ENCODE measurements at regions of chr19 and their contacts with region 1.

Region 1: DNA sequence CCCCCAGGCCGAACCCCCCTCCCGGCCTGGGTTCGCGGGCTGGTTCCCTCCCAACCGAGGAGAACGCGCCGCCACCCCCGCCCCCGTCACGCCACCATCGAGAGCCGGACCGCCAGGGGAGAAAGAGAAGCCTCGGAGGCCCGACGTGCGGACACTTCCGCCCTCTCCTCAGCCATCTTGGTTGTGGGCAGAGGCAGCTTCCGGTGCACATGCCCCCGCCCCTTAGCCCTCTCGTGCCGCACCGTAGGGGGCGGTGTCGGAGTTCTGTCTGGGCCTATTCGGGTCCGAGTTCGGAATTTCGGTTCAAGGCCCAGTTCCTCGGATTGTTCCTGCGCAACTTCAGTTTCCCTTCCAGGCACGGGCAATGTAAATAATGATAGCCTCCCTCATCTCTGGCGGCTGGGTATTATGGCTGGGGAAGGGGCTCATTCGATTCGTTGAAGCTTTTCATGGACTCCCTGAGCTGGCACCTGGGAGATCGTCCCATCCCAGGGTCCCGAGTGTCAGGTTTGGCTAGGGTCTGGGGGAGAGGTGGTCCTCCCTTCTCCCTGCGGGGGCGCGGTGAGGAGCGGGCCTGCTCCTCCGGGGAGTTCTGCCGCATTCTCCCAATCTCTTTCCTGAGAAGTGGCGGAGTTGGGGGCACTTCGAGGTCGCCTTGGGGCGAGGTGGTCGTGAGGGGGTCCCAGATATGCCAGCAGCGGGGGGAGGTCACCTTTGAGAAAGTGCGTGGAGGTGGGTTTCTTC is at the starts of genes IER2 and STX10:
- DNase-seq: peak; percentile 90 to 96 (median 91)
- H3K4me3 ChIP-seq: peak within 1 kb of the TSS; percentile 81 to 98
- H3K4me3 Mint-ChIP-seq: peak within 1 kb of the TSS; percentile 95 to 99 (median 99)
- H3K27ac ChIP-seq: peak within 1 kb of the TSS; percentile 98
- H3K27ac Mint-ChIP-seq: peak within 1 kb of the TSS; percentile 95 to 99 (median 98)
- H3K4me1 ChIP-seq: peaks cover 17% of the 10 kb centered on the region
- H3K4me1 Mint-ChIP-seq: peaks cover 10 to 54% (median 22%) of the 10 kb centered on the region in 4 donors
- H3K27me3 ChIP-seq: no peaks in the 10 kb centered on the region
- H3K27me3 Mint-ChIP-seq: peaks cover 0 to 3% of the 10 kb centered on the region in 2 donors
- total RNA-seq, gene IER2: 148 to 153 TPM
- total RNA-seq, gene STX10: 63.7 to 64.0 TPM

Region 2: DNA sequence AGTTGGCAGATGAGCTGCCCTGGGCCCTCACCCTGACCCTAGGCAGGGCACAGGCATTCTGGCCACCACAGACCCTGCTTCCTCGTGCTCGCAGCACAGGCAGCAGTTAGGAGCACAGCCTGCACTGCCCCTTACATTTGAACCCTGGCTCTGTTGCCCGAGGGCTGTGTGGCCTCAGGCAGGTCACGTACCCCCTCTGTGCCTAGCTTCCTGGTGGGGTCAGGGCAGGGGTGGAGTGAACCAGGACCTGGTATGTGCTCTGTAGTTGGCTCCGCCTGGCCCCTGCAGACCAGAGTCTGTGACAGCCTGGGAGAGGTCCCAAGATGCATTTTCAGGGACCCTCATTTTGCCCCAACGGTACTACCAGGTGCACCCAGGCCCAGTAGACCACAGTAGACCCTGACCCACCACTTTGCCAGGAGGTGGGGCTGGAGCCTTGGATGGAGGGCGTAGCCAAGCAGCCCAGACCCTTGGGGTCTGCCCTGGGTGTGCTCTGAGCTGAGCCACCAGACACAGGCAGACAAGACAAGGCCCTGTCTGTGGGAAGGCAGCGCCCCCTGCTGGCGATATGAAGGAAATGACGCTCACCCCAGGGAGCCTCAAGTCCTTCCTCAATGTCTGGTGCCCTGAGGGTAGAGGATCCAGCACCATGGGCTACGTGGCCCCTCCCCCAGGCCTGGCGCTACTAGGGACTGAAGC is 56.8 kb before region 1 on chr19:
- CTCF ChIA-PET with region 1: no interaction called
- POLR2A ChIA-PET with region 1: interaction called, 25 read pairs
- intact Hi-C with region 1: no loop called
- DNase-seq: peak; percentile 76 to 82 (median 78)
- H3K4me3 ChIP-seq: no peak overlapping the region
- H3K4me3 Mint-ChIP-seq: peak overlapping the region in 2 of 8 donors; percentile 33 to 64
- H3K27ac ChIP-seq: no peak overlapping the region
- H3K27ac Mint-ChIP-seq: peak overlapping the region in 4 of 7 donors; percentile 24 to 68 (median 36)
- H3K4me1 ChIP-seq: peaks cover 38% of the 10 kb centered on the region
- H3K4me1 Mint-ChIP-seq: peaks cover 11 to 37% (median 18%) of the 10 kb centered on the region in 4 donors
- H3K27me3 ChIP-seq: peaks cover 15% of the 10 kb centered on the region
- H3K27me3 Mint-ChIP-seq: peaks cover 5 to 9% of the 10 kb centered on the region in 2 donors

Region 3: DNA sequence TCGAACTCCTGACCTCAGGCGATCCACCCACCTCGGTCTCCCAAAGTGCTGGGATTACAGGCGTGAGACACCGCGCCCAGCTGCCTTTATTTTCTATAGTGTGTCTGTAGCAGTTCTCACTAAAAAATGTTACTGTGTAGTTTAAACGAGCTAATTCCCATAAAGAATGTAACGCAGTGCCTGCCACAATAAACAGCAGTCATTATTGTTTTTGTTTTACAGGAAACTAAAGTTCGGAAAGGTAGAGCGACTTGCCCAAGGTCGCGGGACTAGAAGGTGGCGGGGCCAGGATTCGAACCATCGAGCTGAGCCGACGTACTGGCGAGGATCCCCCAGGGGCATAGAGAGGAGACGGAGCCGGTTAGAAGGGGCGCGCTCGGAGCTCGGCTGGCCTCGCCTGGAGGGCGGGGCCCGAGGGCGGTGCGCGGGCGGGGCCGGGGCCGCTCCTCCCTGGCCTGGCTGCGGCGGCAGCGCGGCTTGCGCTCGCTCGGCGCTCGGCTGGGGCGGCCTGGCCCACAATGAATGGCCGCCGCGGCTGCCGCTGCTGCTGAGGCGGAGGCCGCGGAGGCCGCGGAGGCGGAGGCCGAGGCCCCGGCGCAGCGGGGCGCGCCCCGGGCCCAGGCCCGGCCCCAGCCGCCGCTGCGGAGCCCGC is 32.5 kb before region 1 on chr19 and contains the start of gene NACC1:
- CTCF ChIA-PET with region 1: interaction called, 3 read pairs
- POLR2A ChIA-PET with region 1: interaction called, 132 read pairs
- intact Hi-C with region 1: loop called (anchors 1 kb)
- DNase-seq: peak; percentile 84 to 90 (median 88)
- H3K4me3 ChIP-seq: peak within 1 kb of the TSS; percentile 79 to 94
- H3K4me3 Mint-ChIP-seq: peak within 1 kb of the TSS; percentile 91 to 98 (median 96)
- H3K27ac ChIP-seq: peak within 1 kb of the TSS; percentile 65
- H3K27ac Mint-ChIP-seq: peak within 1 kb of the TSS; percentile 89 to 97 (median 92)
- H3K4me1 ChIP-seq: peaks cover 60% of the 10 kb centered on the region
- H3K4me1 Mint-ChIP-seq: peaks cover 22 to 67% (median 46%) of the 10 kb centered on the region in 4 donors
- H3K27me3 ChIP-seq: no peaks in the 10 kb centered on the region
- H3K27me3 Mint-ChIP-seq: no peaks in the 10 kb centered on the region
- total RNA-seq, gene NACC1: 25.8 to 34.1 TPM

Region 4: GRCh38 chr19:13172068-13172896 is 21.9 kb after region 1 on chr19:
- CTCF ChIA-PET with region 1: interaction called, 51 read pairs
- POLR2A ChIA-PET with region 1: interaction called, 415 read pairs
- intact Hi-C with region 1: loop called (anchors 2 kb)
- DNase-seq: peak; percentile 62 to 92 (median 63)
- H3K4me3 ChIP-seq: peak overlapping the region; percentile 18 to 46
- H3K4me3 Mint-ChIP-seq: peak overlapping the region; percentile 83 to 94 (median 86)
- H3K27ac ChIP-seq: peak overlapping the region; percentile 53
- H3K27ac Mint-ChIP-seq: peak overlapping the region; percentile 94 to 99 (median 98)
- H3K4me1 ChIP-seq: peaks cover 67% of the 10 kb centered on the region
- H3K4me1 Mint-ChIP-seq: peaks cover 37 to 78% (median 50%) of the 10 kb centered on the region in 4 donors
- H3K27me3 ChIP-seq: no peaks in the 10 kb centered on the region
- H3K27me3 Mint-ChIP-seq: no peaks in the 10 kb centered on the region

Region 5: DNA sequence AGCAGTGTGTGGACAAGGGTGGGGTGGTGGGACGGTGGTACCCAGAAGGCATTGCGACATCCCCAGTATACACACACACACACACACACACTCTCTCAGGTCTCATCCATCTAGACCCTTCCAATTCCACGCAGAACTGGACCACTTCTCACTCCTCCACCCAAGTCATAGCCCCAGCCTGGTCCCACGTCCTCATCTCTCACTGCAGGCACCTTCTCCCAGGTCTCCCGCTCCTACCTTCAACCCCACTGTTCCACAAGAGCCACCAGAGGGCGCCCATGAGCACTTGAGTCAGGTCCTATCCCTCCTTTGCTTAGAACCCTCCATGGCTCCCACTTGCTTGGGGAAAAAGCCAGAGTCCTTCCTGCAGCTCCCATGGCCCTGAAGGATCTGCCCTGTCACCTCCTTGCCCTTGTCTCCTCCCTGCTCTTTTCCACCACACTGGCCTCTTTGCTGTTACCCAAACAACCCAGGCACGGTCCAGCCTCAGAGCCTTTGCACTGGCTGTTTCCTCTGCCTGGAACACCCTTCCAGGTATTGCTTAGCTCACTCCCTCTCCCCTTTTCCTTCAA is 62.5 kb after region 1 on chr19:
- CTCF ChIA-PET with region 1: interaction called, 6 read pairs
- POLR2A ChIA-PET with region 1: interaction called, 17 read pairs
- intact Hi-C with region 1: loop called (anchors 1 kb)
- DNase-seq: peak; percentile 62 to 73 (median 66)
- H3K4me3 ChIP-seq: no peak overlapping the region
- H3K4me3 Mint-ChIP-seq: peak overlapping the region in 3 of 8 donors; percentile 43 to 79 (median 44)
- H3K27ac ChIP-seq: no peak overlapping the region
- H3K27ac Mint-ChIP-seq: peak overlapping the region in 5 of 7 donors; percentile 4 to 75 (median 25)
- H3K4me1 ChIP-seq: peaks cover 14% of the 10 kb centered on the region
- H3K4me1 Mint-ChIP-seq: peaks cover 17 to 50% (median 29%) of the 10 kb centered on the region in 4 donors
- H3K27me3 ChIP-seq: no peaks in the 10 kb centered on the region
- H3K27me3 Mint-ChIP-seq: no peaks in the 10 kb centered on the region

Region 6: DNA sequence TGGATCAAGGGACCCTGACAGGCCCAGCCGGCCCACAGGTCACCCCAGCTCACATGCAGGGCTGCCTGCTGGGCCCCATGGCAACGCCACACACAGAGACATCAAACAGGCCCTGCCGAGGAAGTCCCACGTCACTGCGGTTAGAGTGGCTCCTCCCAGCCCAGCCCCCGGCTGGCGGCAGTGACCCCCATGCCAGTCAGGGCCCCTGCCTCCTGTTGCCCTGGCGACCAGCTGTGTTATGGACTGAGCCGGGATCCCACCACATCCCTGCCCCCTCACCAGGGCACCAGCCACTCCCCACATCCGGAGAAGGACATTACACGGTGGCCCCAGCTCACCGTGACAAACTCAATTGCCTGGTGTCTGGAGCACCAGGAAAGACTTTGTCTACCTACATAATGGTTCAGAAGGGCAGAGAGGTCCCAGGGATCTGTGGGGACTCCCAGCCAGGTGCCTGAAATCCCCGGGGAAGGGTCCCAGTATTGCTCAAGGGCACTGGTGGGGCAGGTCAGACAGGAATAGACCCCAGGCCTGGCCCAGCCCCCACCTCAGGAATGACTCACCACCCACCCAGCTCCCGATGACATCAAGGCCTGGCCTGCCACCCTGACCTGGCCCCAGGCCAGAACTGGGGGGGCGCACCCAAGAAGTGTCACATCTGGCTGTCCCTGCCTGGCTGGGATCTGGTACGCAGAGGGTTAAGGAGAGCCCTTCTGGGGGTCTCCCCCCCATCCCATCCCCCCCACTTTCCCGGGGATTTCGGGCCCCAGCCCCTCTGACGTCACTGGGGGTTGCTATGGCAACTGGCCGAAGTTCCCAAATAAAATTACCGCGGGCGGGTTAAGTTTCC is 696.4 kb after region 1 on chr19:
- CTCF ChIA-PET with region 1: no interaction called
- POLR2A ChIA-PET with region 1: no interaction called
- intact Hi-C with region 1: loop called (anchors 5 kb)
- DNase-seq: peak; percentile 99
- H3K4me3 ChIP-seq: peak overlapping the region; percentile 50 to 79
- H3K4me3 Mint-ChIP-seq: peak overlapping the region; percentile 83 to 98 (median 90)
- H3K27ac ChIP-seq: peak overlapping the region; percentile 99
- H3K27ac Mint-ChIP-seq: peak overlapping the region; percentile 99 to 100 (median 100)
- H3K4me1 ChIP-seq: peaks cover 69% of the 10 kb centered on the region
- H3K4me1 Mint-ChIP-seq: peaks cover 33 to 77% (median 50%) of the 10 kb centered on the region in 4 donors
- H3K27me3 ChIP-seq: no peaks in the 10 kb centered on the region
- H3K27me3 Mint-ChIP-seq: peaks cover 0 to 4% of the 10 kb centered on the region in 2 donors

Measured in CD4-positive, alpha-beta memory T cell (primary cell).